Cardiac septum (tissue), 1 donor: ENCODE measurements at regions of chr3 and their contacts with region 1.

Region 1: DNA sequence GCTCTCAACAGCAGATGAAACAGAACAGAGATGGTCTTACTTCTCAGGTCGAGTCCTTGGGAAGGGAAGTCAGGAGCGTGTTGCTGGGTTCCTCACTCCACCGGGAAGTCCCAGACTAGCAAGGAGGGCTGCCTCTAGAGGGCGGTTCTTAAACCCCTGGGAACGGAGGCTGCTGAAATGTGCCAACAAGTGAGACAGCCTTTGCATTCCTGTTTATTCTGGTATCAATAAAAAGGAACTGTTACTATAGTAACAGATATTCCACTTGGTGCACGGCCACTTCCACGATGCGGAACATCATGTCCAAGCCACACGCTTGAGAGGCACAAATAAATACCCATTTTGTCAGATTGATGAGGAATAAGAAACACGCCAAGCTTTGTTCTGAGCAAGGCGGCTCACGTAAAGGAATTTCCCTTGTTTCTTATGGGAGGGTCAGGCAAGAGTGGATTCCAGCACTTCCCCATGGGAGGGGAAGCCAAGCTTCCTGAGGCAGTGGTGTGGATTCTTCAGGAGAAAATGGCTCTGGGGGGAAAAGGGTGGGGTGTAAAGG is at the start of gene FAM107A:
- DNase-seq: no peak
- total RNA-seq, gene FAM107A: 29.9 TPM

Region 2: GRCh38 chr3:58899159-58899952 is 322.0 kb after region 1 on chr3:
- intact Hi-C with region 1: loop called (anchors 10 kb)
- DNase-seq: peak; percentile 76